Activated CD4-positive, alpha-beta T cell treated with anti-CD3 and anti-CD28 coated beads for 36 hours (primary cell): ENCODE measurements at regions of chr12 and their contacts with region 1.

Region 1: DNA sequence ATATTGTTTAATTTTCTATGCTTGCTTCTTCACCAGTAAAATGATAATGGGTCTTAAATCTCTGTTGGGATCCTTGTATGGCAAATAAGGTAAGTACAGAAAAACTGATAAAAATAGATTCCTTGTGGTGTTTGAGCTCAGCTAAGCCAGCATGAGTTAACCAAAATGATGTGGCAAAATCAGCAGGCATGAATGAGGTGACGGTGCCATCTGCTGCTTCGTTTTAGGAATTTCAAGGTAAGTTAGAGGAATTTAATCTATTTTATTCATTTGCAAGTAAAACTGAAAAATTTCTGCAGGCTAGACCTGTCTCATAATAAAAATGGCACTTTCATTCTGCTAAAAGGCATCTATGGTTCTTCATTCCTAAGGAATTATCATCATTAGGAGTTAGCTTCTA is 10.0 kb upstream of the CLEC7A start:
- DNase-seq: peak; percentile 66
- ATAC-seq: no peak
- H3K4me3 Mint-ChIP-seq: no peak overlapping the region
- H3K27ac Mint-ChIP-seq: no peak overlapping the region
- H3K4me1 Mint-ChIP-seq: peaks cover 2% of the 10 kb centered on the region
- H3K27me3 Mint-ChIP-seq: peaks cover 2% of the 10 kb centered on the region

Region 2: GRCh38 chr12:9940375-9940774 is 199.6 kb before region 1 on chr12:
- CTCF ChIA-PET with region 1: interaction called, 5 read pairs
- POLR2A ChIA-PET with region 1: no interaction called
- intact Hi-C with region 1: loop called (anchors 2 to 5 kb)
- DNase-seq: no peak
- ATAC-seq: no peak
- H3K4me3 Mint-ChIP-seq: no peak overlapping the region
- H3K27ac Mint-ChIP-seq: no peak overlapping the region
- H3K4me1 Mint-ChIP-seq: peaks cover 14% of the 10 kb centered on the region
- H3K27me3 Mint-ChIP-seq: peaks cover 3% of the 10 kb centered on the region

Region 3: DNA sequence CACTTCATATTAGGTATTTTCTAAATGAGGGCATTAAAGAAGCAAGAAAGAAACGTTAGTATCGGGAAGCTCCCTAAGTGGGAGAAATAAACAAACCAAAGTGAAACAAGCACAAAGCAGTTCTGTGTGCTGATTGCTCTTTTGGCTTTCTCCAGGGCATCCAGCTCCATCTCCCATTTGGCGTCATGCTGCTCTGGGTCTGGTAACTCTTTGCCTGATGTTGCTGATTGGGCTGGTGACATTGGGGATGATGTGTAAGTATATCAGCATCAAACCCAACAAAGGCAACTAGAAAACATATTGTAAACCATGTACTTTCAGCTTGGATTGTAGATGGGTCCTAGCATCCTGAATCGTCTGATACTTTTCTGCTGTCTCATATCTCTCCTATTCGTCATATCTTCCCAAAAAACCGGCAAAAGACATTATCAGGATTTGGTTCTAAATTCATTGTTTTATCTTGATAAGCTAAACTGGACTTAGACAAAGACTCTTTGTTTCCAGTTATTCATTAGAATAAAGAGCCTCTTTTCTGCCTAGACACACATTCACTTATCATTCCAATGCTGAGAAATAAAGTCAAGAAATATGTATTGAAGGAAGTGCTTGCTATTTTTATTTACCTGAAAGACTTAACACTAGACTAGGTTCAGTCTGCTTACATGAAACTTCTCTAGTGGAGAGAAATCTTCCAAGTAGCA is 127.2 kb before region 1 on chr12:
- CTCF ChIA-PET with region 1: interaction called, 5 read pairs
- POLR2A ChIA-PET with region 1: no interaction called
- intact Hi-C with region 1: loop called in 1 of 2 experiments (anchors 5 kb)
- DNase-seq: no peak
- ATAC-seq: no peak
- H3K4me3 Mint-ChIP-seq: no peak overlapping the region
- H3K27ac Mint-ChIP-seq: no peak overlapping the region
- H3K4me1 Mint-ChIP-seq: no peaks in the 10 kb centered on the region
- H3K27me3 Mint-ChIP-seq: peaks cover 7% of the 10 kb centered on the region

Region 4: GRCh38 chr12:10033783-10034545 is 106.0 kb before region 1 on chr12:
- CTCF ChIA-PET with region 1: interaction called, 14 read pairs
- POLR2A ChIA-PET with region 1: no interaction called
- intact Hi-C with region 1: loop called (anchors 1 to 5 kb)
- DNase-seq: no peak
- ATAC-seq: no peak
- H3K4me3 Mint-ChIP-seq: no peak overlapping the region
- H3K27ac Mint-ChIP-seq: no peak overlapping the region
- H3K4me1 Mint-ChIP-seq: no peaks in the 10 kb centered on the region
- H3K27me3 Mint-ChIP-seq: peaks cover 2% of the 10 kb centered on the region